Endothelial cell of umbilical vein (primary cell): ENCODE measurements at regions of chr1 and their contacts with region 1.

Region 1: GRCh38 chr1:198465201-198466144 is 75.0 kb downstream of the ATP6V1G3 start:
- DNase-seq: peak; percentile 83
- H3K4me3 ChIP-seq: no peak overlapping the region
- H3K27ac ChIP-seq: peak overlapping the region; percentile 53
- H3K4me1 ChIP-seq: peaks cover 9% of the 10 kb centered on the region
- H3K27me3 ChIP-seq: no peaks in the 10 kb centered on the region
- CTCF ChIP-seq: peak; percentile 22 to 48
- POLR2A ChIP-seq: no peak

Region 2: GRCh38 chr1:197521118-197521739 is 944.2 kb before region 1 on chr1:
- CTCF ChIA-PET with region 1: interaction called, 9 read pairs
- POLR2A ChIA-PET with region 1: no interaction called
- dilution Hi-C with region 1: no loop called
- intact Hi-C with region 1: loop called (anchors 1 kb)
- DNase-seq: peak; percentile 46
- H3K4me3 ChIP-seq: no peak overlapping the region
- H3K27ac ChIP-seq: no peak overlapping the region
- H3K4me1 ChIP-seq: no peaks in the 10 kb centered on the region
- H3K27me3 ChIP-seq: no peaks in the 10 kb centered on the region
- CTCF ChIP-seq: peak; percentile 39 to 51
- POLR2A ChIP-seq: no peak

Region 3: DNA sequence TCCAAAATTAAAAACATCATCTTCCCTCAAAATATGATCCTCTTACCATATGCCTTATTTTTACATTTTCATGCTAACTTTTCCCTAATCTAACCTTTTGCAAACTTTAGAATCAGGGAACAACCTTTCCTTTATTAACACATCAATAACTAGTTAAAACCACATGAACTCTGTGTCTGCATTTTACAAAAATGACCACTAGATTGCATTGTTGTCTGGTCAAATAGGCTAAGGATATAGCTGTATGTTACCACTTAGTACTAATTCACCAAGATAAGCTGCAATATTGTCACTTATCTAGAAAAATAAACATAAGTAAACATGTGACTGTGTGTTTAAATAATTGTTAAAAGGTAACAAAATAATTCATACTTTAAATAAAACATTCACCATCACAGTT is 772.5 kb before region 1 on chr1:
- CTCF ChIA-PET with region 1: no interaction called
- POLR2A ChIA-PET with region 1: no interaction called
- dilution Hi-C with region 1: no loop called
- intact Hi-C with region 1: loop called (anchors 5 kb)
- DNase-seq: peak; percentile 23
- H3K4me3 ChIP-seq: no peak overlapping the region
- H3K27ac ChIP-seq: no peak overlapping the region
- H3K4me1 ChIP-seq: peaks cover 6% of the 10 kb centered on the region
- H3K27me3 ChIP-seq: no peaks in the 10 kb centered on the region
- CTCF ChIP-seq: no peak
- POLR2A ChIP-seq: no peak

Region 4: GRCh38 chr1:198072177-198072576 is 393.3 kb before region 1 on chr1:
- CTCF ChIA-PET with region 1: interaction called, 33 read pairs
- POLR2A ChIA-PET with region 1: no interaction called
- dilution Hi-C with region 1: no loop called
- intact Hi-C with region 1: loop called (anchors 1 kb)
- DNase-seq: peak; percentile 37
- H3K4me3 ChIP-seq: no peak overlapping the region
- H3K27ac ChIP-seq: no peak overlapping the region
- H3K4me1 ChIP-seq: no peaks in the 10 kb centered on the region
- H3K27me3 ChIP-seq: no peaks in the 10 kb centered on the region
- CTCF ChIP-seq: peak; percentile 4 to 26
- POLR2A ChIP-seq: no peak

Region 5: GRCh38 chr1:198220428-198220827 is 245.0 kb before region 1 on chr1:
- CTCF ChIA-PET with region 1: no interaction called
- POLR2A ChIA-PET with region 1: no interaction called
- dilution Hi-C with region 1: no loop called
- intact Hi-C with region 1: loop called (anchors 5 kb)
- DNase-seq: peak; percentile 98
- H3K4me3 ChIP-seq: no peak overlapping the region
- H3K27ac ChIP-seq: peak overlapping the region; percentile 75
- H3K4me1 ChIP-seq: peaks cover 15% of the 10 kb centered on the region
- H3K27me3 ChIP-seq: no peaks in the 10 kb centered on the region
- CTCF ChIP-seq: no peak
- POLR2A ChIP-seq: peak; percentile 60

Region 6: GRCh38 chr1:198443374-198444233 is 21.9 kb before region 1 on chr1:
- CTCF ChIA-PET with region 1: interaction called, 3 read pairs
- POLR2A ChIA-PET with region 1: no interaction called
- dilution Hi-C with region 1: no loop called
- intact Hi-C with region 1: loop called (anchors 2 kb)
- DNase-seq: peak; percentile 92
- H3K4me3 ChIP-seq: no peak overlapping the region
- H3K27ac ChIP-seq: peak overlapping the region; percentile 76
- H3K4me1 ChIP-seq: peaks cover 37% of the 10 kb centered on the region
- H3K27me3 ChIP-seq: no peaks in the 10 kb centered on the region
- CTCF ChIP-seq: no peak
- POLR2A ChIP-seq: peak; percentile 25